HepG2 (cell line): ENCODE measurements at regions of chr19 and their contacts with region 1.

Region 1: GRCh38 chr19:17511724-17512573 is 500 bp downstream of the PGLS start:
- DNase-seq: peak; percentile 79
- ATAC-seq: peak; percentile 72
- H3K4me3 ChIP-seq: peak overlapping the region; percentile 85 to 91 (median 88)
- H3K27ac ChIP-seq: peak overlapping the region; percentile 98
- H3K4me1 ChIP-seq: peaks cover 53% of the 10 kb centered on the region
- H3K27me3 ChIP-seq: no peaks in the 10 kb centered on the region; a peak in 1 of 5 replicates
- CTCF ChIP-seq: peak; percentile 77
- EP300 ChIP-seq: no peak
- POLR2A ChIP-seq: peak; percentile 31 to 55; a peak in 2 of 4 replicates
- RAD21 ChIP-seq: peak; percentile 25

Region 2: DNA sequence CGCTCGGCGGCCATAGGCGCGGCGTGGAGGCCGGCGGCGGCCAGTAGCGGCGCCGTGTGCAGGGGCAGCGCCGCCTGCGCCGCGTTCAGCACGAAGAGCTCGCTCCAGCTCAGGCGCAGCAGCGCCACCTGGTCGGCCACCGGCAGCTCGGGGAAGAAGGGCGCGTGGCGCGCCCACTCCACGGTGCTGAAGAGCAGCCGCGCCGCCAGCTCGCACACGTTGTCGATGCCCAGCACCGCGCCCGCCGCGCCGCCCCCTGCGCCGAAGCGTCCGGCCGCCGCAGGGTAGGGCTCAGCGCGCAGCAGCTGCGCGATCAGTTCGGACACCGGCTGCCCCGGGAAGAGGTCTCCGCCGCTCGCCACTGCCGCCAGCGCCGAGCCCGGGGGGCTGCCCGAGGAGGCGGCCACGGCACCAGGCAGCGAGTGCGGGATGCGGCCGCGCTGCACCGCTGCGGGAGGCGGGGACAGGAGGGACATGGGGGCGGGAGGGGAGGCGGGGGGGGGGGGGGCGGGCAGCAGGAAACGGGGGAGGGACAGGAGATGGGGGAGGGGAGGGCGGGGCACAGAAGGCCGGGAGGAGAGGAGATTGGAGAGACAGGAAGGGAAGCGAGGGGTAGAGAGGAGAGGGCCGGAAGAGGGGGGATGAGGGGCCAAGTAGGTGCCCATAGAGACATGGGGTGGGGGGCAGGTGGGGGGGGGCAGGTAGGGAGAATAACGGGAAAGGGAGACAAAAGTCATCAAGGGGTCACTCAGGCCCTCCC is 276.2 kb before region 1 on chr19:
- CTCF ChIA-PET with region 1: no interaction called
- POLR2A ChIA-PET with region 1: no interaction called
- in situ Hi-C with region 1: no loop called
- intact Hi-C with region 1: no loop called
- DNase-seq: no peak
- ATAC-seq: no peak
- H3K4me3 ChIP-seq: no peak overlapping the region
- H3K27ac ChIP-seq: no peak overlapping the region
- H3K4me1 ChIP-seq: peaks cover 42% of the 10 kb centered on the region
- H3K27me3 ChIP-seq: no peaks in the 10 kb centered on the region
- CTCF ChIP-seq: no peak
- EP300 ChIP-seq: no peak
- POLR2A ChIP-seq: no peak
- RAD21 ChIP-seq: no peak

Region 3: GRCh38 chr19:17496337-17496997 is 15.5 kb before region 1 on chr19:
- CTCF ChIA-PET with region 1: interaction called, 7 read pairs
- POLR2A ChIA-PET with region 1: interaction called, 45 read pairs
- in situ Hi-C with region 1: no loop called
- intact Hi-C with region 1: no loop called
- DNase-seq: peak; percentile 81
- ATAC-seq: peak; percentile 85
- H3K4me3 ChIP-seq: no peak overlapping the region
- H3K27ac ChIP-seq: no peak overlapping the region
- H3K4me1 ChIP-seq: peaks cover 40% of the 10 kb centered on the region
- H3K27me3 ChIP-seq: no peaks in the 10 kb centered on the region
- CTCF ChIP-seq: peak; percentile 93
- EP300 ChIP-seq: no peak
- POLR2A ChIP-seq: no peak
- RAD21 ChIP-seq: peak; percentile 89

Region 4: DNA sequence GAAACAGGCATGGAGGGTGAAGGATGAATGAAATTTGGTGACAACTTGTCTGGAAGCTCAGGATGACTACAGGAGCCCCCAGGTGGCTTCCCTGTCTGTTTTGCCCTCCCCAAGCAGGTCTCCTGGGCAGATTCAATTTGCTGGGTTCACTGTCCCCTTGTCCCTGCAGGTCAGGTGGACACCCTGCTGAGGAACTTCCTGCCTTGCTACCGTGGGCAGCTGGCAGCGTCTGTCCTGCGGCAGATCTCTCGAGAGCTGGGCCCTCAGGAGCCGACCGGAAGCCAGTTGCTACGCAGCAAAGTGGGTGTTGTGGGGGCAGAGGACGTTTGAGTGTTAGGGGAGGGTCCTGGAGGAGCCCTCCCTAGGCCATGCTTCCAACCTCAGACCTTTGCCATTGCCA is 18.6 kb after region 1 on chr19:
- CTCF ChIA-PET with region 1: no interaction called
- POLR2A ChIA-PET with region 1: interaction called, 13 read pairs
- in situ Hi-C with region 1: no loop called
- intact Hi-C with region 1: no loop called
- DNase-seq: peak; percentile 39
- ATAC-seq: peak; percentile 75
- H3K4me3 ChIP-seq: peak overlapping the region in 2 of 3 experiments; percentile 10 to 58; a peak in 2 of 6 replicates
- H3K27ac ChIP-seq: no peak overlapping the region
- H3K4me1 ChIP-seq: peaks cover 22% of the 10 kb centered on the region
- H3K27me3 ChIP-seq: peaks cover 0 to 18% of the 10 kb centered on the region in 2 experiments; a peak in 2 of 5 replicates
- CTCF ChIP-seq: no peak
- EP300 ChIP-seq: no peak
- POLR2A ChIP-seq: peak in 1 of 2 experiments; percentile 30; a peak in 1 of 4 replicates
- RAD21 ChIP-seq: no peak

Region 5: GRCh38 chr19:17605761-17606745 is 94.1 kb after region 1 on chr19:
- CTCF ChIA-PET with region 1: no interaction called
- POLR2A ChIA-PET with region 1: interaction called, 17 read pairs
- in situ Hi-C with region 1: no loop called
- intact Hi-C with region 1: no loop called
- DNase-seq: peak; percentile 80
- ATAC-seq: peak; percentile 88
- H3K4me3 ChIP-seq: peak overlapping the region; percentile 27 to 68 (median 59); a peak in 5 of 6 replicates
- H3K27ac ChIP-seq: peak overlapping the region; percentile 76
- H3K4me1 ChIP-seq: peaks cover 44% of the 10 kb centered on the region
- H3K27me3 ChIP-seq: peaks cover 3 to 28% of the 10 kb centered on the region in 2 experiments; a peak in 3 of 5 replicates
- CTCF ChIP-seq: peak; percentile 70
- EP300 ChIP-seq: no peak
- POLR2A ChIP-seq: peak; percentile 61 to 84
- RAD21 ChIP-seq: peak; percentile 87